ENCODE measurements at regions of chr17 and their contacts with region 1.

Region 1: DNA sequence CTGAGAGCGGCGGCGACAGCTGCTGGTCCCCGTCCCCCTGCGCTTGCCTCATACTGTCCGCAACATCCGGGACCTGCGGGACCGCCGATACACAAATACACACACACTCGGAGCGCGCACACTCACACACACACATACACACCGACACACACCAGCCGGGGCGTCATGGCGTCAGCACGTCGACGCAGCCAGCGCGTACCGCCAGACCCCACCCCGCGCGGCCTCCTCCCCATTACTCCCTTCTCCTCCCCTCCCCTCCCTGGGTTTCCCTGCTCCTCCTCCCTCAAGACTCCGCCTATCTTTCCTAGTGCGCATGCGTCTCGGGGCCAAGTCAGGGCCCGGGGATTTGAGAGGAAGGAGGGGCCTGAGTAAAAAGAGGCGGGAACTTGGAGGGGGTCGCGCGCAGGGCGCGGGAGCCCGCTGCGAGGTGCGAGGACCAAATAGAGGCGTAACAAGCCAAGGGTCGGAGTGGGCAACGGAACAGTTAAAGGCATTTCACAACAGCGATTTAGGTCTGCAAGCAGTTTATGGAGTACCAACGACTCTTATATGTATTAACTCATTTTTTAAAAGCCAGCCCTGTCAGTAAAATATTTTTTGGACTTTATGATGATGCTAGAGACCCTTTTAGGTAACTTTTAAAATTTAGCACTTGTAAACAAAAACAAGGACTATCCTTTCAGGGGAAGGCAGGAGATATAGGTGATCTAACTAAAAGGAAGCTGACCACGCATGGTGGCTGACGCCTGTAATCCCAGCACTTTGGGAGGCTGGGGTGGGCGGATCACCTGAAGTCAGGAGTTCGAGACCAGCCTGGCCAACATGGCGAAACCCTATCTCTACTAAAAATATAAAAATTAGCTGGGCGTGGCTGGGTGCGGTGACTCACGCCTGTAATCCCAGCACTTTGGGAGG is at the start of gene SPOP:
- DNase-seq: peak; percentile 100
- H3K4me3 Mint-ChIP-seq: peak within 1 kb of the TSS; percentile 93
- H3K27ac Mint-ChIP-seq: peak within 1 kb of the TSS; percentile 95
- H3K4me1 Mint-ChIP-seq: peaks cover 38% of the 10 kb centered on the region
- H3K27me3 Mint-ChIP-seq: no peaks in the 10 kb centered on the region
- total RNA-seq, gene SPOP: 66.9 to 69.2 TPM

Region 2: DNA sequence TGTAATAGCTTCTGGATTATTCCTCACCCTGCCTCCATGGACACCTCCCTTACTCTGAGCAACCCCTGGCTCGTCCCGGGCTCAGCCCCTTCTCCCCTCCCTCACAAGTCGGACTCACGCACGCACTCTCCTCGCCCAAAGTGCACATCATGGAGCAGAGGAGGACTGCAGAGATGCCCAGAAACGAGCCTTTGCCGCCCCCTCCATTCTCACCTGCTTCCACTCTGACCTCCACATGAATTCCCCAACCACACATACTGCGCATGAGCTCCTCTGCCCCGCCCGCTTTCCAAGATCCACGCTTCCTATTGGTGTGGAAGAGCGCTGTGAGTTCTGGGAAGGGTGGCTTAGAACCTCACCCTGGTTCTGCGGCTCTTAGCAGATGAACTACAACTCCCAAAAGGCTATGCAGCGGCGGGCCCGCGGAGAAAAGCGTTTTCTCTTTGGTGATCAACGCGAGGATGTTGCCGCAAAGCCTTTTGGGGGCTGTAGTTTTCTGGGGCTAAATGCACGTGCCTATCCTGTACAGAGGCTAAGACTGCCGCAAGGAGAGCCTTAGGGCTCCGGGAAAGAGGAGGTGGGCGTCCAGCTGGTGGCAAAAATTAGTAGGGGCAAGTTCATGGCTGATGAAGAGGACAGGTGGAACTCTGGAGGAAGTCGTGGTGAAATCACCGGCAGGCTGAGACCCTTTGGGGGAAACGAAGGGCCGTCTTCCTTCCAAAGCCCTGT is 263.4 kb before region 1 on chr17 and contains the start of gene PHB1:
- CTCF ChIA-PET with region 1: no interaction called
- intact Hi-C with region 1: loop called (anchors 1 kb)
- DNase-seq: peak; percentile 99
- H3K4me3 Mint-ChIP-seq: peak within 1 kb of the TSS; percentile 100
- H3K27ac Mint-ChIP-seq: peak within 1 kb of the TSS; percentile 78
- H3K4me1 Mint-ChIP-seq: peaks cover 32% of the 10 kb centered on the region
- H3K27me3 Mint-ChIP-seq: no peaks in the 10 kb centered on the region
- total RNA-seq, gene PHB1: 390 to 404 TPM

Region 3: DNA sequence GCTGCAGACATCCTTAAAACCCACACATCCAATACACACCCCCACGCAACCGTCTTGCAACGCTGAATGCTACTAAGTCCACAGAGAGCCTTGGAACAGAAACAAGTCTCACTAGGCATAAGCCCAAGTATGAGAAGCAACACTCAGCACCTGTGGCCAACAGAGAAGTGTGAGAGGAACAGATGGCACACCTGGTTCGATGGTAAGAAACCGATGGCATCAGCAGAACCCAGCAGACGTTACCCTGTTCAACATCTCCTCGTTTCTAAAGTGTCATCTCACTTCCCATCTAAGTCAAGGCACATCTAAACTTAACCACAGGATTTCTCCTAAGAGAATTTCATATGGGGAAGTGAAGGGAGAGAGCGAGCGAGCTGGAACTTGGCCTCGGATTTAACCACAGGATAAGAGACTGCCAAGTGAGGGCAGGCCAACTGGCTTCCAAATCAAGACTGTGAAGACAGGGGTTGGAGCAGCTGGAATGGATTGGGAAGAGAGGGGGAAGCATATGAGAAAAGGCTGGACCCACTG is 61.5 kb before region 1 on chr17:
- CTCF ChIA-PET with region 1: no interaction called
- intact Hi-C with region 1: loop called (anchors 5 kb)
- DNase-seq: no peak
- H3K4me3 Mint-ChIP-seq: no peak overlapping the region
- H3K27ac Mint-ChIP-seq: no peak overlapping the region
- H3K4me1 Mint-ChIP-seq: peaks cover 23% of the 10 kb centered on the region
- H3K27me3 Mint-ChIP-seq: no peaks in the 10 kb centered on the region

Region 4: DNA sequence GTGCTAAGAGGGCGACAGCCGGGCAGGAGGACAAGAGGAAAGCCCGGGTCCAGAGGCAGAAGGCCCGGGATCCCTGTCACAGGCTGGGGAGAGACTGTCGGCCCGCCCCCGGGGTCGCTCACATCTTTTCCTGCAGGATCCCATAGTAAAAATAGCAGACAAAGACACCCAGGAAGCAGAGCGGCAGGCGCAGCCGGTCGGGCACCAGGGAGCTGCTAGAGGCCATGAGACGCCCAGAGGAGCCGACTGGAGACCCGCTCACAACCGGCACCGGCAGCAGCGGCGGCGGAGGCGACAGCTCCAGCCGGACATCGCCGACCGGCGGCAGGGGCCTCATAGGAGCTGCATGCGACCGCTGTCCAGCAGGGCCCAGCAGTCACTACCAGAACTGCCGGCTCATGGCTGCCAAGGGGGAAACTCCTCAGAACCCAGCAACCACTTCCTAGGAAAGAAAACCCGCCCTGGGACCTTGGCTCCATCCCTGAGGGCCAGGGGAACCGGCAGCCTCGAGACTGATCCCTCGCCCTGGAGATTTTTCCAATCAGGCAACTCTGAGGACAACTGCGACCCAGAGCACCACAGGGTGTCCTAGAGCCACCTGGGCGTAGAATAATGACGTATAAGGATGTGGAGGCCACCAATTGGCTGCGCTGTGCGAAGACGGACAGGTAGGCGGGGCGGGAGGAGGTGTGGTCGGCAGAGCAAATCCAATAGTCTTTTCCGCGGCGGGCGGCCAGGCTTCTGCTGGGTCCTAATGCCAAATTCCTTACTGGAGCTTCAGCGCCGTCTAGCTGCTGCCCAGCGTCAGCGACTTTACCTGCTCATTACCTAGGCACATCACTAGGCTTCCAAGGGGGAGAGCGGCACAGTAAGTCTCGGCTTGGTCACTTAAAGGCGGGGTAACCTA is 29.7 kb after region 1 on chr17 and contains the start of gene SLC35B1:
- CTCF ChIA-PET with region 1: interaction called, 6 read pairs
- intact Hi-C with region 1: loop called (anchors 1 kb)
- DNase-seq: peak; percentile 99
- H3K4me3 Mint-ChIP-seq: peak within 1 kb of the TSS; percentile 84
- H3K27ac Mint-ChIP-seq: peak within 1 kb of the TSS; percentile 98
- H3K4me1 Mint-ChIP-seq: peaks cover 36% of the 10 kb centered on the region
- H3K27me3 Mint-ChIP-seq: no peaks in the 10 kb centered on the region
- total RNA-seq, gene SLC35B1: 35.3 to 39.5 TPM

Region 5: DNA sequence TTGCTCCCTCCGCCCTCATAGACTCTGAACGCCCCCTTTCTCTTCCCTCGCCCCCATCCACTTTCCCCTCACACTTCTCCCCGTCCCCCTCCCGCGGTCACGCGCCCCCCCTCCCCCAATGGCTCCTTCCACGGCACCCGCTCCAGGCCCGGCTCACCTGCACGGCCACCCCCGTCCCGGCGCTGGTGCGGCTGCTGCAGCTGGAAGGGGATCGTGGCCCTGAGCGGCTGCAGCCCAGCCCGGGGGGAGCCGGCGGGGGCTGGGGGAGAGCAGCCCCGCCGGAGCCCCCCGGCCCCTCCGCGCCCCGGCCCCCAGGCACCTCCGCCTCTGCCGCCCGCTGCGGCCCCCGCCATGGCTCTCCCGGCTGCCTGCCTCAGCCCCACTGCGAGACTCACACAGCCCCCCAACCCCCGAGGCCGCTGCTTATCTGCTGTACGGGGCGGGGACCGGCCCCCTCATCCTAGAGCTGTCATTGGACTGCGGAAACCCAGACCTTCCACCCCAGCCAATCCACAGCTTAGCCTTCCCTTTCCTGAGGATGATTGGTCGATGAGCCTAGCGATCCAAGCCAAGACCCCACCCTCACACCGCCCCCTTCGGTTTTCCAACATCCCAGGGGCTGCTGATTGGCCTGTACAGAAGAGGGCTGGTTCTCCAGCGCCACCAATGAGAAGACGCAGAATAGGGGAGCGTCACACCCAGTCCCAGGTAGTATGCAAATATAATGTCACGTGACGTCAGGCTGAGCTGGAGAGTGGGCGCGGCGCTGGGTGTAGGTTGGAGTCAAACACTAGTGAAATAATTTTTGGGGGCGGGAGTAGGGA is 85.8 kb after region 1 on chr17 and contains the start of gene FAM117A:
- CTCF ChIA-PET with region 1: no interaction called
- intact Hi-C with region 1: loop called (anchors 1 kb)
- DNase-seq: peak; percentile 99
- H3K4me3 Mint-ChIP-seq: peak within 1 kb of the TSS; percentile 88
- H3K27ac Mint-ChIP-seq: peak within 1 kb of the TSS; percentile 83
- H3K4me1 Mint-ChIP-seq: peaks cover 47% of the 10 kb centered on the region
- H3K27me3 Mint-ChIP-seq: no peaks in the 10 kb centered on the region
- total RNA-seq, gene FAM117A: 17.7 TPM